ENCODE measurements at regions of chr1 and their contacts with region 1.

Region 1: GRCh38 chr1:172089768-172090510 is 248.6 kb downstream of the DNM3 start:
- DNase-seq: peak; percentile 41
- ATAC-seq: peak; percentile 90
- H3K4me3 Mint-ChIP-seq: peak overlapping the region; percentile 36
- H3K27ac Mint-ChIP-seq: peak overlapping the region; percentile 8
- H3K4me1 Mint-ChIP-seq: peaks cover 8% of the 10 kb centered on the region
- H3K27me3 Mint-ChIP-seq: no peaks in the 10 kb centered on the region
- CTCF ChIP-seq: no peak

Region 2: GRCh38 chr1:172135076-172135672 is 45.2 kb after region 1 on chr1:
- CTCF ChIA-PET with region 1: interaction called, 4 read pairs
- POLR2A ChIA-PET with region 1: no interaction called
- intact Hi-C with region 1: loop called (anchors 1 kb)
- DNase-seq: no peak
- ATAC-seq: peak; percentile 49
- H3K4me3 Mint-ChIP-seq: no peak overlapping the region
- H3K27ac Mint-ChIP-seq: no peak overlapping the region
- H3K4me1 Mint-ChIP-seq: peaks cover 5% of the 10 kb centered on the region
- H3K27me3 Mint-ChIP-seq: no peaks in the 10 kb centered on the region
- CTCF ChIP-seq: no peak

Region 3: DNA sequence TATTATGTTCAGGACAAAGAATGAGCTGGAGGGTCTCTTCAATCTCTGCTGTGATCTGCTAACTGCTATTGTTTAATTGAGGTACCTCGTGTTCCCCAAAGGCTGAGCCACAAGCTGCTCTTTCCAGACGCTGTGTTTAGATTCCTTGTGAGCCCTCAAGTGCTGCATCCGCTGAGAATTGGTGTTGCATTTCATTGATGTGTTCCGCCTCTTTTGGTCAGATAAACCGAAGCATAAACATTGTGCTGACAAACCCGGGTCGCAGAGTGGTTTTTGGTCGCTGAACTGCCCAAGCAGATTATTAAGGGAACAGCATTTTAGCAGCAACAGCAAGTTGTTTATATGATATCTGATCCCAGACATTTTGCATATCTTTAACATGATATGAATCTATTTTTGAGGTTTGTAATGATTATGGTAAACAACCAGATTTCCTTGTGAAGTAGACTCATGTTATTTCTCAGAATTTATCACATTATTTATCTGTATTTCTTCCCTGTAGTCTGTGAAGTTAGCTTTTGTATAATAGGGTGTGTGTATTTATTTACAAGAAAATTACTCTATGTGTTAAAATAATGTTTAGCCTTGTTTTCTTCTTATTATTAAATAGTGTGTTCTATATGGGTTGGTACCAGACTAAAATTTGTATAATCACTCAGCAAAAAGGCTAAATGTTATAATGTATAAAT is 113.3 kb after region 1 on chr1:
- CTCF ChIA-PET with region 1: no interaction called
- POLR2A ChIA-PET with region 1: no interaction called
- intact Hi-C with region 1: no loop called
- DNase-seq: no peak
- ATAC-seq: no peak
- H3K4me3 Mint-ChIP-seq: no peak overlapping the region
- H3K27ac Mint-ChIP-seq: no peak overlapping the region
- H3K4me1 Mint-ChIP-seq: peaks cover 22% of the 10 kb centered on the region
- H3K27me3 Mint-ChIP-seq: no peaks in the 10 kb centered on the region
- CTCF ChIP-seq: no peak

Region 4: DNA sequence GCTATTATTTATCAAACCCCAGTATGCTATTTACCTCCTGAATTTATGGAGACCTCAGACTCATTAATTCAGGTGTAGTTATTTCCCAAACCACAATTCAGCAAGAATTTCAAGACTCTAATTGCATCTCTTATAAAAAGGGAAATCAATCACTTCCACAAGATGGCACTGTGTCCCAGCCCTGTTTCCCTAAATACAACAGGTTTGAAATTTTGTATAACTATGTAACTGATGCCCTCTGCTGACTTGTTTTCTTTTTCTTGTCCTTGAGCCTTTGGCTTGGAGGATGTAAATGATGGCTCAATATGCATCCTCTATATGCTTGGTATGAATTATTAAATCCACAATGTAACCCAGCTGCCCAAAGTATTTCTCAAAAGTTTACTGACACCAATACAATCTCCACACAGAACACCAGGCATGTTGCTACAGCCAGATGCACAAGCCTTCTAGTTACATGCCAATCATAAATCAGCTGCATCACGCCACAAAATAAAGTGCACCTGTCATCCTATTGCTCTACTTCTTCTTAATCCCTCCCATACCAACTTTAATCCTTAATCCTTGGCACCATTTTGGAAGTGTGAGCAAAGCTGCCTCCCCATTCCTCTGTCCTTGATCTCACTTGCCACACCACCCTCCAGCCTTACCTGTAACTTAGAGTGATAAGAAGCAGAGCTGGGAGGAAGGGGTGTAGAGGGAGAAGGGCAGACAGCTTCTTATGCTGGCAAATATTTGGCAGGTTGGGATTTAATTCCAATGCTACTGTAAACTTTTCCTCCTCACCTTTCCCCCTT is 339.6 kb after region 1 on chr1:
- CTCF ChIA-PET with region 1: interaction called, 9 read pairs
- POLR2A ChIA-PET with region 1: no interaction called
- intact Hi-C with region 1: loop called (anchors 1 kb)
- DNase-seq: no peak
- ATAC-seq: peak; percentile 67
- H3K4me3 Mint-ChIP-seq: no peak overlapping the region
- H3K27ac Mint-ChIP-seq: no peak overlapping the region
- H3K4me1 Mint-ChIP-seq: peaks cover 13% of the 10 kb centered on the region
- H3K27me3 Mint-ChIP-seq: no peaks in the 10 kb centered on the region
- CTCF ChIP-seq: no peak

Measured in activated B cell treated with CpG ODN at 0.5 μM for 24 hours (primary cell).